Natural killer cell (primary cell): ENCODE measurements at regions of chr20 and their contacts with region 1.

Region 1: DNA sequence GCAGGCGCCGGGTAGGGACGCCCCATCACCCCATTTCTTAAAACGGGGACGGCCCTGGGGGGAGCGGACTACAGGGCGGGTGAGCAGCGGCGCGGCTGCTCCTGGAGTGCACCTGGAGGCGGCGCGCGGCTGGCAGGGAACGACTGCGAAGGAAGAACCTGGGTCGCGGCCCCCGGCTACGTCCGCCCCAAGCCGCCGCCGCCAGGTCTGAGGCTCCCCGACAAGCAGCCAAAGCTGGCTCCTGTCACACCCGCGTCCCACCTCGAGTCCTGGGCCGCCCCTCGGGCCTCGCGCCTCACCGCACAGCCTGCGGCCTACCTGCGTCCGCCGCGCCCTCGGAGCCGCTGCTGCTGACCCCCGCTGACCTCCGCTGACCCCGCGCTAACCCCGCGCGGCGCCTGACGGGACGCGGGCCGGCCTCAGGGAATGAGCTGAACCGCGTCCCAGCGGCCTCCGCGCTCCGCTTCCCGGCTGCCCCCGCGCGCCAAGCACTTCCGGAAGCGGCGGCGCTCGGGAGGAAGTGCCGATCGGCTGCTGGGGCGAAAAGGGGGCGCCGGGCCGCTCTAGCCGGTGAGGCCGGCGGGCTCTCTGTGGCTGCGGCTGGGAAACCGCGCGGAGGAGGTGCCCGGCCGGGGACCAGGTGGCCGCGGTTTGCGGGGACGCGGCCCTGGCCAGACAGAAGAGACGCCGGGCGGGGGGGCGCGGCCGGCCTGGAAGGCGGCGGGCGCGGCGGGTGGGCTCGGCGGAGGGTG is at the starts of genes ARFRP1 and ZGPAT:
- DNase-seq: peak; percentile 84 to 93
- ATAC-seq: peak; percentile 85 to 92 (median 88)
- H3K4me3 ChIP-seq: peak within 1 kb of the TSS; percentile 43
- H3K4me3 Mint-ChIP-seq: peak within 1 kb of the TSS; percentile 84
- H3K27ac ChIP-seq: peak within 1 kb of the TSS; percentile 78
- H3K27ac Mint-ChIP-seq: peak within 1 kb of the TSS; percentile 83 to 87
- H3K4me1 ChIP-seq: peaks cover 29% of the 10 kb centered on the region
- H3K4me1 Mint-ChIP-seq: peaks cover 37 to 42% of the 10 kb centered on the region in 2 donors
- H3K27me3 ChIP-seq: no peaks in the 10 kb centered on the region
- H3K27me3 Mint-ChIP-seq: no peaks in the 10 kb centered on the region
- CTCF ChIP-seq: no peak
- total RNA-seq, gene ARFRP1: 43.9 to 55.8 (median 50.6) TPM
- total RNA-seq, gene ZGPAT: 39.3 to 47.7 (median 46.1) TPM

Region 2: GRCh38 chr20:63409459-63410435 is 298.0 kb before region 1 on chr20:
- intact Hi-C with region 1: no loop called
- DNase-seq: peak in 1 of 2 donors; percentile 26
- ATAC-seq: no peak
- H3K4me3 ChIP-seq: no peak overlapping the region
- H3K4me3 Mint-ChIP-seq: no peak overlapping the region
- H3K27ac ChIP-seq: no peak overlapping the region
- H3K27ac Mint-ChIP-seq: no peak overlapping the region
- H3K4me1 ChIP-seq: no peaks in the 10 kb centered on the region
- H3K4me1 Mint-ChIP-seq: no peaks in the 10 kb centered on the region
- H3K27me3 ChIP-seq: no peaks in the 10 kb centered on the region
- H3K27me3 Mint-ChIP-seq: peaks cover 0 to 3% of the 10 kb centered on the region in 2 donors
- CTCF ChIP-seq: no peak

Region 3: GRCh38 chr20:63739130-63740069 is 31.7 kb after region 1 on chr20 and contains the start of gene SLC2A4RG:
- intact Hi-C with region 1: loop called (anchors 5 kb)
- DNase-seq: peak; percentile 53 to 86
- ATAC-seq: peak; percentile 33 to 66 (median 58)
- H3K4me3 ChIP-seq: peak within 1 kb of the TSS; percentile 62
- H3K4me3 Mint-ChIP-seq: peak within 1 kb of the TSS; percentile 89
- H3K27ac ChIP-seq: peak within 1 kb of the TSS; percentile 36
- H3K27ac Mint-ChIP-seq: peak within 1 kb of the TSS in 1 of 2 donors; percentile 40
- H3K4me1 ChIP-seq: peaks cover 61% of the 10 kb centered on the region
- H3K4me1 Mint-ChIP-seq: peaks cover 14 to 37% of the 10 kb centered on the region in 2 donors
- H3K27me3 ChIP-seq: no peaks in the 10 kb centered on the region
- H3K27me3 Mint-ChIP-seq: no peaks in the 10 kb centered on the region
- CTCF ChIP-seq: no peak
- total RNA-seq, gene SLC2A4RG: 90.4 to 100 (median 95.5) TPM

Region 4: GRCh38 chr20:63791497-63792156 is 83.9 kb after region 1 on chr20:
- intact Hi-C with region 1: loop called (anchors 1 kb)
- DNase-seq: no peak
- ATAC-seq: no peak
- H3K4me3 ChIP-seq: no peak overlapping the region
- H3K4me3 Mint-ChIP-seq: no peak overlapping the region
- H3K27ac ChIP-seq: no peak overlapping the region
- H3K27ac Mint-ChIP-seq: no peak overlapping the region
- H3K4me1 ChIP-seq: peaks cover 3% of the 10 kb centered on the region
- H3K4me1 Mint-ChIP-seq: no peaks in the 10 kb centered on the region
- H3K27me3 ChIP-seq: no peaks in the 10 kb centered on the region
- H3K27me3 Mint-ChIP-seq: peaks cover 0 to 3% of the 10 kb centered on the region in 2 donors
- CTCF ChIP-seq: no peak